Esophagus muscularis mucosa (tissue), 4 donors: ENCODE measurements at regions of chr2 and their contacts with region 1.

Region 1: GRCh38 chr2:26330113-26330549 is 15.8 kb upstream of the SELENOI start:
- DNase-seq: peak; percentile 98
- H3K4me3 ChIP-seq: no peak overlapping the region
- H3K27ac ChIP-seq: no peak overlapping the region
- H3K4me1 ChIP-seq: peaks cover 0 to 3% (median 0%) of the 10 kb centered on the region in 4 donors
- H3K27me3 ChIP-seq: no peaks in the 10 kb centered on the region
- CTCF ChIP-seq: peak; percentile 89 to 91 (median 90)
- EP300 ChIP-seq: no peak
- POLR2A ChIP-seq: no peak

Region 2: DNA sequence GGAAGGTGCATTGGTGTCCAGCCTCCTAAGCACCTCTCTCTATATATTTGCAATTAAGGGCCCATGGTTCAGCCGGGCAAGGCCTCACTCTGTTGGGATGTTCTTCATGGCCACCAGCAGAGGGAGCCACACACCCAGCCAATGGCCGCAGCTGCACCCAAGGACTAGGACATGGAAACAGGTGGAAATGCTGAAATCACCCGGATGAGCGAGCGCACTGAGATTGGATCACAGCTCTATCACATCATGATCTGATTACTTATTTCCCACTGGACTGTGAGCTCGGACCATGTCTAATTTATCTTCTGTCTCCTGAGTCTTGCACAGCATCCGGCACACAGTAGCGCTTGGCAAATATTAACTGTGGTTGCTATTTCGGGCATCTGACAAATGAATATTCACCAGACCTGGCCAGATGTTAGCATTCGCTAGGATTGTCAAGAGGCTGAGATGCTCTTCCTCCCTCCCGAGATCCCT is 379.0 kb before region 1 on chr2:
- intact Hi-C with region 1: loop called (anchors 10 kb)
- DNase-seq: no peak
- H3K4me3 ChIP-seq: no peak overlapping the region
- H3K27ac ChIP-seq: peak overlapping the region in 1 of 4 donors; percentile 25
- H3K4me1 ChIP-seq: peaks cover 0 to 8% (median 5%) of the 10 kb centered on the region in 4 donors
- H3K27me3 ChIP-seq: no peaks in the 10 kb centered on the region
- CTCF ChIP-seq: peak; percentile 90 to 94 (median 90)
- EP300 ChIP-seq: no peak
- POLR2A ChIP-seq: no peak

Region 3: DNA sequence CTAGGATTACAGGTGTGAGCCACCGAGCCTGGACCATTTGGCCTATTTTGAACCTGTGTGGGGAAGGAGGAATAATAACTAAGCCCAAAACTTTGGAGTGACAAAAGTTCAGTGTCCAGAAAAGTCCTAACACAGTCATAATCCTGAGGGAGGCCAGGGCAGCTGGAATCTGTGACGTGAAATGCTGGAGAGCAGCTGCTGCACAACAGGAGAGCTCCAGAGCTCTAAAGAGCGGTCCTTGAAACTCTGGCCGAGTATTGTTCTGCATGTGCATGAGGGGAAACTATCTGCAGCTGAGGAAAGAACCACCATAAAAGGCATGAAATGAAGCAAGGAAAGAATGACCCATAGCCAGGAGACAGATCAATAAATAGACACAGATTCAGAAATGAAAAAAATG is 113.5 kb before region 1 on chr2:
- intact Hi-C with region 1: no loop called
- DNase-seq: peak; percentile 37
- H3K4me3 ChIP-seq: no peak overlapping the region
- H3K27ac ChIP-seq: no peak overlapping the region
- H3K4me1 ChIP-seq: no peaks in the 10 kb centered on the region
- H3K27me3 ChIP-seq: no peaks in the 10 kb centered on the region
- CTCF ChIP-seq: no peak
- EP300 ChIP-seq: no peak
- POLR2A ChIP-seq: no peak

Region 4: GRCh38 chr2:26235085-26235484 is 95.0 kb before region 1 on chr2:
- intact Hi-C with region 1: loop called (anchors 5 kb)
- DNase-seq: no peak
- H3K4me3 ChIP-seq: no peak overlapping the region
- H3K27ac ChIP-seq: no peak overlapping the region
- H3K4me1 ChIP-seq: peaks cover 12 to 23% (median 20%) of the 10 kb centered on the region in 4 donors
- H3K27me3 ChIP-seq: no peaks in the 10 kb centered on the region
- CTCF ChIP-seq: peak in 2 of 3 experiments; percentile 25 to 35
- EP300 ChIP-seq: no peak
- POLR2A ChIP-seq: no peak